ENCODE measurements at regions of chr1 and their contacts with region 1.

Region 1: DNA sequence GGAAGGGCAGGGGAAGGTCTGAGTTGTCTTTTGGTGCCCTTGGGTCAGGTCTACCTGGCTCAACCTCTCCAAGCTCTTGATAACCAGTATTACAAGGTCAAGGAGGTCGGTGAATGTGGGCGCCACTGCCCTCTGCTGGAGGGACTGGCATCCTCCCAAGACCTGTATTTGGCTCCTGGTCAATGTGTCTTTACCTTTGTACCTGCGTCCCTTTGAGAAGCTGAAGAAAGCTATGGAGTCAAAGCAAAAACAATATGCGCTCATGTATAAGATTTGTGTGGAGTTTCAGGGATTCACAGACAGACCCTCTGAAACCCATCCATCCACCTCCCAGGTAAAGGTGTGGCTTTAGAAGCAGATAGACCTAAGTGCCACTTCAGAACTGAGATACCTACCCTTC is 61.8 kb upstream of the NBL1 start:
- DNase-seq: peak; percentile 74
- H3K4me3 ChIP-seq: no peak overlapping the region
- H3K27ac ChIP-seq: no peak overlapping the region
- H3K4me1 ChIP-seq: no peaks in the 10 kb centered on the region
- CTCF ChIP-seq: peak; percentile 95

Region 2: DNA sequence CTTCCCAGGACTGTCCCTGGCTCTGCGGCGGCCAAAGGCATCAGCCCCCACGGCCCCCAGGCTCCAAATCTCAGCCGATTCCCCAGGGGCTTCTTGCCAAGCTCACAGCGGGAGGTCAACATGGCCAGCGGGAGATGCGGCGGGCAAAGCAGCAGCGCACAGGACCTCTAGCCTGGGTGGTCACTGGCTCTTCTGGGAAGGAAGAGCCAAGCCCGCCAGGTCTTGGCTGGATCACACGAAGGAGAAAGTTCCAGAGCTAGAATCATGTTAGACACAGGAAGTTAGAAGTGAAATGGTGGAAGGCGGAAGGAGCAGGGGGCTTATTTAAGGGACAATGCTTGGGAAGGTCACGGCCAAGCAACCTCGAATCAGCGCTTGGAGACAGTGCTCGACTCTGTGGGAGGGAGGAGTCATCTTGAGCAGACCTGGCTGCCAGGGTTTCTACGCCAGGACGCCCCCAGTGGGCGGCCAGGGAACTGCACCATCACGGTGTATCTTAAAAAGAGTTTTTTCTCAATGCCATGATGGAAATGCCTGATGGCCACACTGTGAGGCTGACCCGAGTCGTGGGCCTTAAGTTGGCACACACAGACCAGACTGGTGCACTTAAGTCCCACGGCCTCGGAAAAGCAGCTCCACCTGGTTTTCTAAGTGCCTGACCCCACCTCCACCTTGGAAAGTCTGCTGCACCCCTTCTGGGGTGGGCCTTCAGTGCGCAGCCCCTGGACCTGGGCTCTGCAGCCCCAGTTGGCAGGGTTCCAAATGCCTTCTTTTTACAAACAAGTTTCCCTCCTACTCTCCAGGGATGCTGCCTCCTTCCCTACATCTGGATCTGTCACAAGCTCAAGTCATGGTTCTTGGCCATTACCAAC is 240.9 kb before region 1 on chr1:
- CTCF ChIA-PET with region 1: no interaction called
- POLR2A ChIA-PET with region 1: no interaction called
- intact Hi-C with region 1: loop called (anchors 1 kb)
- DNase-seq: peak; percentile 75
- H3K4me3 ChIP-seq: no peak overlapping the region
- H3K27ac ChIP-seq: no peak overlapping the region
- H3K4me1 ChIP-seq: no peaks in the 10 kb centered on the region
- CTCF ChIP-seq: peak; percentile 88

Region 3: GRCh38 chr1:19390901-19391595 is 191.3 kb before region 1 on chr1:
- CTCF ChIA-PET with region 1: no interaction called
- POLR2A ChIA-PET with region 1: no interaction called
- intact Hi-C with region 1: loop called (anchors 1 kb)
- DNase-seq: peak; percentile 74
- H3K4me3 ChIP-seq: peak overlapping the region; percentile 41
- H3K27ac ChIP-seq: peak overlapping the region; percentile 77
- H3K4me1 ChIP-seq: peaks cover 44% of the 10 kb centered on the region
- CTCF ChIP-seq: peak; percentile 99

Region 4: DNA sequence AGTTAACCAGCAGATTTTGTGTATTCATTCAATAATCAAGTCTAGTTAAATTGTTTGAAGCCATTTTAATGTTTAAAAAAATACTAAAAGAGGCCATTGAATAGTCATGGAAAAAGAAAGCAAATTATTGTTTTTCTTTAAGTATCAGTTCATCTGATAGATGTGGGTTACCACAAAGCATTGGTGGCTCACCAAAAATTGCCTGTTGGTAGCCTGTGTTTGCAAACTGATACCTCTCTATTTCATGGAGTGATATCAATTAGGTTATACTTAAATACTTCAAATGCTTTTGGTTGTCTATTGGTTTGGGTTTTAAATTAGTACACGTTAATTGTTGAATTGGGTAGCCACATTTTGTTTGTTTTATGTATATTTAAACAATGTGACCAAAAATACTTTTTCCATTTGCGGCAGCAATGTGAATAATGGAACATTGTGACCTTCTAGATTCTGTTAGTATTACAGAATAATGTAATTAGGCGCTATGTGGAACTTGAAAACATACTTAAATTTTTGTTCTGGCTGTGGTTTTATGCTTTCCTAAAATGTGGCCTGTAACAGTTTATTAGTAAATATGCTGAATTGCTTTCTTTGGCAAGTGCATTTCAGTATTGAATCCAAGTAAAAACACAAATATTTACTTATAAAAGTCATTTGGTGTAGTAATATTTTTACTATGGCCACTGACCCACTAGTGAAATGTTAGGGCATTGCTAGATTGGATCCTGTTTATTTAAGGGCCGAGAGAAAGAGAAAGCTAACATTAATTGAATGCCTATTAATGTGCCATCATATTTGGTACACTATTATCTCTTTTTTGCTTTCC is 24.7 kb after region 1 on chr1:
- CTCF ChIA-PET with region 1: no interaction called
- POLR2A ChIA-PET with region 1: no interaction called
- intact Hi-C with region 1: no loop called
- DNase-seq: no peak
- H3K4me3 ChIP-seq: no peak overlapping the region
- H3K27ac ChIP-seq: no peak overlapping the region
- H3K4me1 ChIP-seq: peaks cover 4% of the 10 kb centered on the region
- CTCF ChIP-seq: no peak